HCT116 (cell line): ENCODE measurements at regions of chr14 and their contacts with region 1.

Region 1: GRCh38 chr14:20606190-20606901 is 15.2 kb upstream of the RNASE12 start:
- DNase-seq: no peak
- ATAC-seq: peak; percentile 63
- H3K4me3 ChIP-seq: no peak overlapping the region
- H3K27ac ChIP-seq: no peak overlapping the region
- H3K4me1 ChIP-seq: peaks cover 0 to 14% of the 10 kb centered on the region in 2 experiments; a peak in 3 of 4 replicates
- H3K27me3 ChIP-seq: no peaks in the 10 kb centered on the region
- CTCF ChIP-seq: peak; percentile 61 to 79 (median 76); a peak in 5 of 6 replicates
- POLR2A ChIP-seq: no peak
- RAD21 ChIP-seq: peak; percentile 84

Region 2: DNA sequence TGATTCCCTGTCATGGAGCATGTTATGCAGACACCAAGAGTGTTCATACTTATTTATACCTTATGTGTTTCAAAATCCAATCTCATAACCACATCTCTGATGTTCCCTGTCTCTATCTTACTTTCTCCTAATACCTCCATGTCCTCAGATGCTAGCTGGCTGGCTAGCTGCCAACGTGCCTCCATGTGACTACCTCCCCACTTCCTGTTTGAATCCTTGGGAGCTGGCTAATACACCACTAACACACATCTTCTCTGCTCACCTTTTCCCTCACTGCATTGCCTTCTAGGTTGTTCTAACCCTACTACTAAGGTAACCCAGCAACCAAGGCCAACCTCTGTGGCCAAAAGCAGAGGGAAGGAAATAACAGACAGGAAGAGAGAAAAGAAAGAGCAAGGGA is 327.9 kb before region 1 on chr14:
- CTCF ChIA-PET with region 1: no interaction called
- POLR2A ChIA-PET with region 1: no interaction called
- RAD21 ChIA-PET with region 1: no interaction called
- intact Hi-C with region 1: no loop called
- DNase-seq: no peak
- ATAC-seq: no peak
- H3K4me3 ChIP-seq: no peak overlapping the region
- H3K27ac ChIP-seq: no peak overlapping the region
- H3K4me1 ChIP-seq: 0 out of 4 replicates have a peak, but pooled peaks cover 0 to 3% of the 10 kb centered on the region in 2 experiments
- H3K27me3 ChIP-seq: no peaks in the 10 kb centered on the region
- CTCF ChIP-seq: no peak
- POLR2A ChIP-seq: no peak
- RAD21 ChIP-seq: no peak

Region 3: GRCh38 chr14:20327005-20327869 is 279.1 kb before region 1 on chr14:
- CTCF ChIA-PET with region 1: interaction called, 20 read pairs
- POLR2A ChIA-PET with region 1: no interaction called
- RAD21 ChIA-PET with region 1: no interaction called
- intact Hi-C with region 1: loop called (anchors 1 kb)
- DNase-seq: peak; percentile 58
- ATAC-seq: peak; percentile 61
- H3K4me3 ChIP-seq: no peak overlapping the region
- H3K27ac ChIP-seq: peak overlapping the region; percentile 31; the same call in 1 of the 2 replicates
- H3K4me1 ChIP-seq: peaks cover 6 to 15% of the 10 kb centered on the region in 2 experiments; a peak in 3 of 4 replicates
- H3K27me3 ChIP-seq: no peaks in the 10 kb centered on the region
- CTCF ChIP-seq: peak; percentile 51 to 79 (median 63); a peak in 5 of 6 replicates
- POLR2A ChIP-seq: no peak
- RAD21 ChIP-seq: peak; percentile 73

Region 4: DNA sequence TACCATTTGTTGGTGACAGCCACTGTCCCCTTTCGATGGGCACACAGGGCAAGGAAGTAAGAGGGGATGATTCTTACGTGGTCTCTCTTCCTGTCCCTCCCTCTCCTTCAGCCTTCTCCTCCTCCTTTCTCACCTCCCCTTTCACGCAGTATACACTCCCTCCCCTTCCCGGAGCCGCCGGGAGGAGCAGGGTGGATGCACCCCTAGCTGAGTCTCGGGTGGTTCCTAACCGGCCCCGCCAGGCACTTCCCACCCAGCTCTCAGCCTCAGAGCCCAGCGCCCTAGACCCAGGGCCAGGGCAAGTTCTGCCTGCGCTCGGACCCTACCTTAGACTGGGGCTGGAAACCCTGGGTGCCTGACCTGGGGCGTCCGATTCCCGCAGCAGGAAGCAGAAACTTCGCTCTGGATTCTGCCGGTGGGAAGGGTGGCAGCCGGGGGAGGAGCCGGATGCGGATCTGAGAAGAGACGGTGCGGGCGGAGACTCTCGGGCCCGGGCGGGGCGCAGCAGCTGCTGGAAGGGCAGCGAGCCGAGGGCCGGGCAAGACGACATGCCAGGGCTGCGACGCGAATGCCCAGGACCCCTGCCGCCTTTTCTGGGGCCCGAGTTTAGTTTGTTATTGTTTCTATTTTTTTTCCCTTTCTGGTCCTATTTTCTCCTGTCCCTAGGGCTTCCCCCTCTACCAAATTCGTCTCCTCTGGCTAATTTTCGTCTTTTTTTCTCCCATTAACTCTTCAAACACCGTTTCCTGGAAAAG is 193.1 kb before region 1 on chr14 and contains the start of gene TEP1:
- CTCF ChIA-PET with region 1: interaction called, 7 read pairs
- POLR2A ChIA-PET with region 1: interaction called, 5 read pairs
- RAD21 ChIA-PET with region 1: interaction called in 1 of 2 experiments, 3 read pairs
- intact Hi-C with region 1: loop called (anchors 1 kb)
- DNase-seq: peak; percentile 58
- ATAC-seq: peak; percentile 93
- H3K4me3 ChIP-seq: peak within 1 kb of the TSS; percentile 91 to 96
- H3K27ac ChIP-seq: peak within 1 kb of the TSS; percentile 98
- H3K4me1 ChIP-seq: peaks cover 11 to 41% of the 10 kb centered on the region in 2 experiments
- H3K27me3 ChIP-seq: no peaks in the 10 kb centered on the region
- CTCF ChIP-seq: no peak
- POLR2A ChIP-seq: no peak
- RAD21 ChIP-seq: no peak
- total RNA-seq, gene TEP1: 22.4 TPM

Region 5: DNA sequence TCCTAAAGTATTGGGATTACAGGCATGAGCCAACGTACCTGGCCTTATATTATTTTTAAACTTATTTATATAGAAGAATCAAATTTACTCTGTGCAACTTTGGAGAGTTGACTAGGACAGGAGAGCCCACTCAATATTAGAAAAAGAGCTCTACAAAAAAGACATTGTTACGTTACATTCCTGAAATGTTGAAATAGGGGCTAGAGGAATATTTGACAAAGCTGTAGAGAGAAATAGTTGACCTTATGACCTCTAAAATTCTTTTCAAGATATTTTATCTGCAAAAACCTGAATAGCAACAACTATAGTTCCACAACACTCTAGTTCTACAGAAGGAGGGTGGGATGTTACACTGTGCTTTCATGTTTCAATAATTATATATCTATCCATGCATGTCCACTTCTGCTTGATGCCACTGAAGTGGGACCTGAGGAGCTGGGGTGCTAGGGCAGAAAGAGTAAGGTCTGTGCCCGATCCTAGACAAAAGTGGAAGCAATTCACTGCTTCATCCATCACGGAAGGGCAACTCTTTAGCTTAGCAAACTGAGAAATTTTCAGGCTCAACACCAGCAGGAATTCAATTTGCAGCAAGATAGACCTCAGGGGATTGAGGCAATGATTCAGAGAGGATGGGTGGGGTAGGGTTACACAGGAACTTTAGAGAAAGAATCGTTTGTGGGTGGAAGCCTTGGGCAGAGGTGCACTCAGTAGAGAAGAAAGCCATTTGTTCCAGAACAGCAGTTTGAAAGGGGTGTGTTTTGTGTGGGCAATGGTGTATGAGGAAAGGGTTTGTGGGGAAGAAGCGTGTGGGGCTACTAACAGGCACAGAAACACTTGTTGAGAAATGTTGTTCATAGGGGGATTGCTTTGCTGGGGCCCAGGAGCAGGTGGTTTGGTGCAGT is 117.0 kb before region 1 on chr14:
- CTCF ChIA-PET with region 1: interaction called, 7 read pairs
- POLR2A ChIA-PET with region 1: no interaction called
- RAD21 ChIA-PET with region 1: no interaction called
- intact Hi-C with region 1: loop called (anchors 1 kb)
- DNase-seq: no peak
- ATAC-seq: no peak
- H3K4me3 ChIP-seq: no peak overlapping the region
- H3K27ac ChIP-seq: no peak overlapping the region
- H3K4me1 ChIP-seq: peaks cover 7 to 30% of the 10 kb centered on the region in 2 experiments; a peak in 3 of 4 replicates
- H3K27me3 ChIP-seq: no peaks in the 10 kb centered on the region
- CTCF ChIP-seq: no peak
- POLR2A ChIP-seq: no peak
- RAD21 ChIP-seq: no peak

Region 6: DNA sequence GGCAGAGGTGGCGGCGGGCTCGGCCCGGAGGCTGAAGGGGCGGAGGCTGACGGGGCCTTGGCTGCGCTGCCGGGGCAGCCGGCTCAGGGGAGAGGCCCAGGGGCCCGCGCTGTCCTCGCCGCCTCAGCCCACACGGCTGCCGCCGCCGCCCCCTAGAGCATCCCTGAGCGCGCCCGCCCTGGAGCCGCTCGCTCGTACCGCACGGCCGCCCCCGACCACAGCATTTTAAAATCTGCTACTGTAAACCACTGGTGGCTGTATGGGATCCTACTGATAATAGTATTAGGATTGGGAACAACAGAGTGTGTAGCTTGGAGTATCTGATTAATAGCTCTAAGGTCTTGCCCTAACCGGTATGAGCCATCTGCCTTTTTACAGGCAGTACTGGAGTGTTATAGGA is 117.1 kb after region 1 on chr14:
- CTCF ChIA-PET with region 1: no interaction called
- POLR2A ChIA-PET with region 1: no interaction called
- RAD21 ChIA-PET with region 1: no interaction called
- intact Hi-C with region 1: no loop called
- DNase-seq: no peak
- ATAC-seq: no peak
- H3K4me3 ChIP-seq: no peak overlapping the region
- H3K27ac ChIP-seq: no peak overlapping the region
- H3K4me1 ChIP-seq: no peaks in the 10 kb centered on the region
- H3K27me3 ChIP-seq: peaks cover 23% of the 10 kb centered on the region
- CTCF ChIP-seq: no peak
- POLR2A ChIP-seq: no peak
- RAD21 ChIP-seq: no peak